Activated B cell treated with CpG ODN at 0.5 μM for 24 hours (primary cell): ENCODE measurements at regions of chr7 and their contacts with region 1.

Region 1: GRCh38 chr7:20598459-20599309 is 16.8 kb upstream of the ABCB5 start:
- DNase-seq: no peak
- ATAC-seq: peak; percentile 75
- H3K4me3 Mint-ChIP-seq: no peak overlapping the region
- H3K27ac Mint-ChIP-seq: no peak overlapping the region
- H3K4me1 Mint-ChIP-seq: peaks cover 4% of the 10 kb centered on the region
- H3K27me3 Mint-ChIP-seq: peaks cover 21% of the 10 kb centered on the region
- CTCF ChIP-seq: peak; percentile 84

Region 2: GRCh38 chr7:19713676-19714075 is 885.0 kb before region 1 on chr7:
- CTCF ChIA-PET with region 1: interaction called, 223 read pairs
- POLR2A ChIA-PET with region 1: interaction called, 6 read pairs
- intact Hi-C with region 1: loop called (anchors 1 kb)
- DNase-seq: no peak
- ATAC-seq: no peak
- H3K4me3 Mint-ChIP-seq: no peak overlapping the region
- H3K27ac Mint-ChIP-seq: no peak overlapping the region
- H3K4me1 Mint-ChIP-seq: peaks cover 14% of the 10 kb centered on the region
- H3K27me3 Mint-ChIP-seq: peaks cover 9% of the 10 kb centered on the region
- CTCF ChIP-seq: no peak

Region 3: GRCh38 chr7:19754521-19755116 is 844.1 kb before region 1 on chr7:
- CTCF ChIA-PET with region 1: interaction called, 22 read pairs
- POLR2A ChIA-PET with region 1: no interaction called
- intact Hi-C with region 1: loop called (anchors 1 kb)
- DNase-seq: no peak
- ATAC-seq: peak; percentile 42
- H3K4me3 Mint-ChIP-seq: no peak overlapping the region
- H3K27ac Mint-ChIP-seq: no peak overlapping the region
- H3K4me1 Mint-ChIP-seq: no peaks in the 10 kb centered on the region
- H3K27me3 Mint-ChIP-seq: no peaks in the 10 kb centered on the region
- CTCF ChIP-seq: no peak

Region 4: DNA sequence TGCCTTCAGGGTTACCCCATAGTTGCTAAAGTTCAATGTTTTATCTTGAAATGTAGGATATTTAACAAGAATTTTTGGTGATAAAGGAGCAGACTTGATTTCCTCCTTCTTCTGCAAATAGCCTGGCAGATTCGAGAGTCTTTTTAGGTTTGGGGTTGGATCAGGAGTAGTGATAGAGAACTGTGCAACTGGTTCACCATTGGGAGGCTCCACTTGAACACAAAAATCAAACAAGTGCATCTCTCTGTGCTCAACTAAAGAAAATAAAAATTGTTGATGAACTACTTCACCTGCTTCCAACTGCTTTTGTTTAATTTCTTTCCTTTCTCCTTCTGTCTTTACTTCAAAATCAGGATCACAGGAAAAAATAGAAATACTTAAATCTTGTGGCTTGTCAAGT is 440.0 kb before region 1 on chr7:
- CTCF ChIA-PET with region 1: interaction called, 10 read pairs
- POLR2A ChIA-PET with region 1: no interaction called
- intact Hi-C with region 1: loop called (anchors 1 kb)
- DNase-seq: no peak
- ATAC-seq: no peak
- H3K4me3 Mint-ChIP-seq: no peak overlapping the region
- H3K27ac Mint-ChIP-seq: no peak overlapping the region
- H3K4me1 Mint-ChIP-seq: peaks cover 16% of the 10 kb centered on the region
- H3K27me3 Mint-ChIP-seq: no peaks in the 10 kb centered on the region
- CTCF ChIP-seq: no peak

Region 5: GRCh38 chr7:20229646-20230500 is 368.8 kb before region 1 on chr7:
- CTCF ChIA-PET with region 1: no interaction called
- POLR2A ChIA-PET with region 1: no interaction called
- intact Hi-C with region 1: no loop called
- DNase-seq: no peak
- ATAC-seq: no peak
- H3K4me3 Mint-ChIP-seq: no peak overlapping the region
- H3K27ac Mint-ChIP-seq: no peak overlapping the region
- H3K4me1 Mint-ChIP-seq: peaks cover 19% of the 10 kb centered on the region
- H3K27me3 Mint-ChIP-seq: no peaks in the 10 kb centered on the region
- CTCF ChIP-seq: no peak

Region 6: GRCh38 chr7:20310963-20311742 is 287.5 kb before region 1 on chr7:
- CTCF ChIA-PET with region 1: interaction called, 14 read pairs
- POLR2A ChIA-PET with region 1: no interaction called
- intact Hi-C with region 1: loop called (anchors 1 kb)
- DNase-seq: no peak
- ATAC-seq: peak; percentile 37
- H3K4me3 Mint-ChIP-seq: no peak overlapping the region
- H3K27ac Mint-ChIP-seq: peak overlapping the region; percentile 64
- H3K4me1 Mint-ChIP-seq: peaks cover 16% of the 10 kb centered on the region
- H3K27me3 Mint-ChIP-seq: no peaks in the 10 kb centered on the region
- CTCF ChIP-seq: peak; percentile 31

Region 7: GRCh38 chr7:20588678-20589077 is 10.0 kb before region 1 on chr7:
- CTCF ChIA-PET with region 1: interaction called, 19 read pairs
- POLR2A ChIA-PET with region 1: no interaction called
- intact Hi-C with region 1: no loop called
- DNase-seq: no peak
- ATAC-seq: no peak
- H3K4me3 Mint-ChIP-seq: no peak overlapping the region
- H3K27ac Mint-ChIP-seq: no peak overlapping the region
- H3K4me1 Mint-ChIP-seq: no peaks in the 10 kb centered on the region
- H3K27me3 Mint-ChIP-seq: peaks cover 6% of the 10 kb centered on the region
- CTCF ChIP-seq: no peak

Region 8: DNA sequence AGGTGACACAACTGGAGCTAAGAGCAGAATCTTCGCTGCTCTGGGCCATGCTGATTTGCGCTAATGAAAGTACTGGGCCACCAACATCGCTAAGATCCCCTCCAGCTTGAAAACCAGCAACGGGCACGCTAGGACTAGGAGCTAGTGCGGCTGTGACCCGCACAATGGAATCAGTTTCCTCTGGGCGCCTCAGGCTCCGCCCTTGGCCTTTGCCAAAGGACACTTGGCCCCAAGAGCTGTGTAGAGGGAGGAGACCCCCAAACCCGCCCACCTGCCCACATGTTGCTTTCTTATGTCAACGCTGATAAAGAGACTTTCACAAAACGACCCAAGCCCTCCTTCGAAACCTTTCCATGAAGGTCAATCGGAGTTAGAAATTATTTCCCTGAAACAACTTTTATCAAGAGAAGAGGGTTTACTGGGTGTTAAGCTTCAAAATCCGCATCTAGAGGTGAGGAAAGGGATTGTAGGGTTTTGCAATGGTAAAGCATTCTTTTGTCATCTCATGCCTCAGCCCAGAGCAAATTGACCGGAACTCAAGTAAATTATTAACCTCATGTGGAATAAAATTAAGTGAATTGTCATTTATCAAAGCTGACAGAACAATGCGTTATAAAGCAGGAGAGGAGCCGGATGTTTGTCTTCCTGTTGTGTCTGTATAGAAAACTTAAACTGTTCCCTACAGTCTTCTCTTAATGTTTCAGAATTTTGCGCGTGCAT is 26.1 kb after region 1 on chr7:
- CTCF ChIA-PET with region 1: no interaction called
- POLR2A ChIA-PET with region 1: no interaction called
- intact Hi-C with region 1: no loop called
- DNase-seq: no peak
- ATAC-seq: no peak
- H3K4me3 Mint-ChIP-seq: no peak overlapping the region
- H3K27ac Mint-ChIP-seq: no peak overlapping the region
- H3K4me1 Mint-ChIP-seq: no peaks in the 10 kb centered on the region
- H3K27me3 Mint-ChIP-seq: peaks cover 2% of the 10 kb centered on the region
- CTCF ChIP-seq: no peak